ENCODE measurements at regions of chr6 and their contacts with region 1.

Region 1: DNA sequence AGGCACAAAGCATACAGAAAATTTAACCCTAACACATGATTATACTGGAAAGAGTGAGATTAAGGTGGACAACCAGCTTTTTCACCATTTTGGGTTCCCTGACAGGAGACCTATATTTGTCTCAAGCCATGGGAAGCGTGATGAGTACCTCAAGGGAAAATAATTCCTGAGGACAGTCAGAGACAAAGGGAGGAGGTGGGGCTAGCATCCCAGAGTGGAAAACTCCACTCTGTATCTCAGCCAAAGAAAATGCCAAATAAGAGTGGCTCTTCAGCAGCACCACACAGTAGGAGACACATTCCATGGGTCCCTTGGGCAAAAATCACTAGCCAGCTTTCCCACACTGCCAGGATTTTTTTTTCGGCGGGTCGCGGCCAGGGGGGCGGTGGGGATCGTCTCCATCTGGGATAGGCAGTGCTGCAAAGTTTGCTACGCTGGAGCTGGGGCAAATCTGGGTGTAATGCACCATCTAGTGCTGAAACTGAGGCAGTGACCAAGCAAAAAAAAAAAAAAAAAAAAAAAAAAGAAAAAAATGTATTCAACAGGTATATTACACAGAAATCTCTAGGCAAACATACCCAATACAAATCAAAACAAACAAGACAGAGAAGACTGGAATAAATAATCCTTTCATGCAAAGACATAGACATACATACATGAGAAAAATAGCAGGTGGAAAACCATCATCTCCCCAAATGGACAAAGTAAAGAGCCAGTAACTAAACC is 77.3 kb upstream of the SLC35F1 start:
- DNase-seq: peak; percentile 33 to 70
- H3K4me3 ChIP-seq: peak overlapping the region; percentile 29
- H3K4me1 ChIP-seq: 0 out of 2 replicates have a peak, but pooled peaks cover 2% of the 10 kb centered on the region
- H3K27me3 ChIP-seq: peaks cover 8% of the 10 kb centered on the region

Region 2: DNA sequence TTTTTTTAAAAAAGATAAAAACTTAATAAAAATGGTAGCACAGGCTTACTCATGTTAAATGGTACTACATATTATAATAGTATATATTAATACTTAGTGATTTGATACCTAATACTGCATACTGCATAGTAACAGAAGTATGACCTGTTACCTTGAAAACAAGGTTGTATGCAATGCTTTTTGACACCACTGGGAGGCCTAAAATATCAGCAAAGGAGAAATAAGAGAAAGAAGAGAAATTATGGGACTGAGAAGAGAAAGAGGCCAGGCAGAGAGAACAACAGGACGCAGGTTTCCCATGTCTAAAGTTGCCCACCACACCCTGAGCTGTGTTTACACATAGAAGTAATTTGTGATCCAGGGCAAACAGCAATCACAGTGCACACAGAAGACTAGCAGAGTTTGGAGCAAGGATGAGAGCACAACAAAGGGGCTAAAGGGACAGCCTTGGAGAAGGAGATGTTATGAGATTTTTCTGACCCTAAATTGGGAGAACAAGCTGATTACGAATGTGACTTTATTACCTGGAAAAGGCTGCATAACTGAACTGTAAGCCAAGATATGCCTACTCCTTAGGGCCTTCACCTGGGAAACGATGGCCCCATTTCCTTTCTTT is 477.2 kb before region 1 on chr6:
- in situ Hi-C with region 1: loop called (anchors 10 kb)
- DNase-seq: peak; percentile 11 to 15
- H3K4me3 ChIP-seq: no peak overlapping the region
- H3K4me1 ChIP-seq: no peaks in the 10 kb centered on the region
- H3K27me3 ChIP-seq: peaks cover 5% of the 10 kb centered on the region; the same call in 1 of the 2 replicates

Region 3: GRCh38 chr6:117449549-117450439 is 380.0 kb before region 1 on chr6:
- in situ Hi-C with region 1: loop called (anchors 10 kb)
- DNase-seq: peak; percentile 76 to 79
- H3K4me3 ChIP-seq: no peak overlapping the region
- H3K4me1 ChIP-seq: peaks cover 4% of the 10 kb centered on the region; the same call in 1 of the 2 replicates
- H3K27me3 ChIP-seq: peaks cover 18% of the 10 kb centered on the region

Region 4: GRCh38 chr6:118042855-118043254 is 213.1 kb after region 1 on chr6:
- in situ Hi-C with region 1: no loop called
- DNase-seq: no peak
- H3K4me3 ChIP-seq: no peak overlapping the region
- H3K4me1 ChIP-seq: no peaks in the 10 kb centered on the region
- H3K27me3 ChIP-seq: no peaks in the 10 kb centered on the region

Region 5: DNA sequence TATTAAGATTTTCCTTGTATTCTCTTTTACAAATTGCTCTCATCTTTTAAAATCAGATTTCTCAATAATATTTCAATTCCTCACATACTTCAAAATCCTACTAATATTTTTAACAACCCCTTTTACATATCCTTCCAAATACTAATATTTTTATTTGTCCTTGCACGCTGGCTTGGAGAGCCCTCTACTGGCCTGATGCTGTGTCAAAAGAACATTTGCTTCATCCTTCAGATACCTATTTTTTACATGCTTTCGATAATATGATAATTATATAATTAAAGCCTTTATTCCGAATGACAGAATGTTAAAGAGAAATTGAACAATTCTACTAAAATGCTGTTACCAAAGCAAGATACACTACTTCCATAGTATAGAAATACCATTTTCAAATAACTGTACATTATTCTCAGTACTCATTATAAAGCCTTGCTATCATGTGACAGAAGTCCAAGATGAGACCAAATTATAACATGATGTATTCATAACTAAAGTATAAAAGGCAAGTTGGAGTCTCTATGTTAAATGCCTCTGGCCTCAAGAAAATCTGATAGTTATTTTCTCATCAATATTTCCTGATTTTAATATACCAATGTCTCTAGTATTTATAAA is 679.4 kb after region 1 on chr6:
- in situ Hi-C with region 1: loop called (anchors 25 kb)
- DNase-seq: peak in 1 of 2 experiments; percentile 22
- H3K4me3 ChIP-seq: no peak overlapping the region
- H3K4me1 ChIP-seq: no peaks in the 10 kb centered on the region
- H3K27me3 ChIP-seq: no peaks in the 10 kb centered on the region

Measured in HAP-1 (cell line).